ENCODE measurements at regions of chr2 and their contacts with region 1.

Region 1: GRCh38 chr2:160994141-160995002 is 165.9 kb upstream of the TANK start:
- DNase-seq: peak; percentile 77 to 81 (median 80)
- H3K4me3 ChIP-seq: no peak overlapping the region
- H3K4me3 Mint-ChIP-seq: peak overlapping the region in 7 of 8 donors; percentile 19 to 72 (median 64)
- H3K27ac ChIP-seq: no peak overlapping the region
- H3K27ac Mint-ChIP-seq: peak overlapping the region in 4 of 7 donors; percentile 1 to 78 (median 64)
- H3K4me1 ChIP-seq: peaks cover 5% of the 10 kb centered on the region
- H3K4me1 Mint-ChIP-seq: peaks cover 8 to 10% (median 9%) of the 10 kb centered on the region in 4 donors
- H3K27me3 ChIP-seq: no peaks in the 10 kb centered on the region
- H3K27me3 Mint-ChIP-seq: no peaks in the 10 kb centered on the region

Region 2: DNA sequence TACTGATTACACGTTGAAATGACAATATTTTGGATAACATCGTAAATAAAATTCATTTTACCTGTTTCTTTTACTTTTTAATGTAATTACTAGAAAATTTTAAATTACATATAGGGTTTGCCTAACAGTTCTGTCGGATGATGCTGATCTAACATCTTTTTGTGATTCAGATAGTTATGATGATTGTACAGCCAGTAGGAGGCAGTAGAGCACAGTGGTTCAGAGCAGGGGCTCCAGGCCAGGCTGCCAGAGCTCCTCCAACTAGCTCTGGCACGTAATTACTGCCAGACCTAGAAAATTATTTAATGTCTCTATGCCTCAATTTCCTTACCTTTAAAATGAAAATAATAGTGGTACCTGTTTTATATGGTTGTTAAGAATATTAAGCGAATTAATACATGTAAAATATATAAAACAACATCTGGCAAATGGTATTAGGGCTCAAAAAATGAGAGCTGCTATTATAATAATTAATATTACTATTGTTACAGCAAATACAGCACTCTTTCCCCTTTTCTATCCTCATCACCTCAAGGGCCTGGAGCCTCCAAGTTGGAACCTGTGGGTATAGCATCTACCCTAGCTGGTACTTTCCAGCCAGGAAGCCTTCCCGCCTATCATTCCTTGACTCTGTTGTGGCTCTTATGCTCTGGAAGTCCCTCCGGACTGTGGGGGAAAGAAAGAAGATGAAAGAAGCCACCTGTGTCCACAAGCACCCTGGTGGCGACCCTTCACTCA is 884.3 kb before region 1 on chr2:
- CTCF ChIA-PET with region 1: interaction called, 46 read pairs
- POLR2A ChIA-PET with region 1: no interaction called
- intact Hi-C with region 1: loop called (anchors 1 kb)
- DNase-seq: peak; percentile 49 to 60 (median 55)
- H3K4me3 ChIP-seq: no peak overlapping the region
- H3K4me3 Mint-ChIP-seq: no peak overlapping the region
- H3K27ac ChIP-seq: no peak overlapping the region
- H3K27ac Mint-ChIP-seq: no peak overlapping the region
- H3K4me1 ChIP-seq: no peaks in the 10 kb centered on the region
- H3K4me1 Mint-ChIP-seq: no peaks in the 10 kb centered on the region
- H3K27me3 ChIP-seq: no peaks in the 10 kb centered on the region
- H3K27me3 Mint-ChIP-seq: peaks cover 11 to 16% of the 10 kb centered on the region in 2 donors

Region 3: GRCh38 chr2:160252278-160252887 is 742.0 kb before region 1 on chr2:
- CTCF ChIA-PET with region 1: interaction called, 182 read pairs
- POLR2A ChIA-PET with region 1: interaction called, 4 read pairs
- intact Hi-C with region 1: loop called (anchors 1 kb)
- DNase-seq: peak in 1 of 5 donors; percentile 17
- H3K4me3 ChIP-seq: no peak overlapping the region
- H3K4me3 Mint-ChIP-seq: no peak overlapping the region
- H3K27ac ChIP-seq: no peak overlapping the region
- H3K27ac Mint-ChIP-seq: no peak overlapping the region
- H3K4me1 ChIP-seq: no peaks in the 10 kb centered on the region
- H3K4me1 Mint-ChIP-seq: peaks cover 0 to 5% (median 0%) of the 10 kb centered on the region in 4 donors
- H3K27me3 ChIP-seq: no peaks in the 10 kb centered on the region
- H3K27me3 Mint-ChIP-seq: no peaks in the 10 kb centered on the region

Region 4: DNA sequence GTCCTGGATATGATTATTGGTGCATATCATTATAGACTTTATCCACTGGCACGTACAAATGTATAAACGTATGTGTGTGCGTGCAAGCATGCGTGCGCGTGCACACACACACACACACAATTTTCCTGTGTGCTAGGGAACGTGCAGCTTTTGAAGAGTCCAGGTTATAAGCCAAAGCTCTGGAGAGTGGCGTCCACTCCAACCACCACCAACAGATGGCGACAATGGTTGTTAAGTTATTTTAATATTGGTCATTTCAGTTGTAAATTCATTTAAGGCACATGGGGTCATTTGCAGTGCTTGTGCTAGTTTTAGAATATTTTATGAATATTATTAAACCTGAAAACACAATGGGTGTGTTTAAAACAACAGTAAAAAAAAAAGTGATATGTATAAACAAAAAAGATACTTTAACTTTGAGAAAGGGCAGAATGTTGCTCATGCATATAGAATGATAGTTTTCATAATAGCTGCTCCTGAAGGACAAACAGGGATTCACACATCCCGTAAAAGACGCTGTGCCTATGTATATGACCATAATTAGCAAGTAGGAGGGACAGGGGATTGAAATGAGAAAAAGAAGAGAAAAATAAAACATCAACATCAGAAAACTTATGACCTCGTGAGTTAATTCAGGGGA is 670.1 kb before region 1 on chr2:
- CTCF ChIA-PET with region 1: interaction called, 98 read pairs
- POLR2A ChIA-PET with region 1: interaction called, 4 read pairs
- intact Hi-C with region 1: loop called (anchors 1 kb)
- DNase-seq: peak in 4 of 5 donors; percentile 21 to 36 (median 28)
- H3K4me3 ChIP-seq: no peak overlapping the region
- H3K4me3 Mint-ChIP-seq: peak overlapping the region in 3 of 8 donors; percentile 8 to 32 (median 18)
- H3K27ac ChIP-seq: no peak overlapping the region
- H3K27ac Mint-ChIP-seq: peak overlapping the region in 2 of 7 donors; percentile 33 to 51
- H3K4me1 ChIP-seq: peaks cover 66% of the 10 kb centered on the region
- H3K4me1 Mint-ChIP-seq: peaks cover 63 to 95% (median 82%) of the 10 kb centered on the region in 4 donors
- H3K27me3 ChIP-seq: no peaks in the 10 kb centered on the region
- H3K27me3 Mint-ChIP-seq: no peaks in the 10 kb centered on the region

Region 5: DNA sequence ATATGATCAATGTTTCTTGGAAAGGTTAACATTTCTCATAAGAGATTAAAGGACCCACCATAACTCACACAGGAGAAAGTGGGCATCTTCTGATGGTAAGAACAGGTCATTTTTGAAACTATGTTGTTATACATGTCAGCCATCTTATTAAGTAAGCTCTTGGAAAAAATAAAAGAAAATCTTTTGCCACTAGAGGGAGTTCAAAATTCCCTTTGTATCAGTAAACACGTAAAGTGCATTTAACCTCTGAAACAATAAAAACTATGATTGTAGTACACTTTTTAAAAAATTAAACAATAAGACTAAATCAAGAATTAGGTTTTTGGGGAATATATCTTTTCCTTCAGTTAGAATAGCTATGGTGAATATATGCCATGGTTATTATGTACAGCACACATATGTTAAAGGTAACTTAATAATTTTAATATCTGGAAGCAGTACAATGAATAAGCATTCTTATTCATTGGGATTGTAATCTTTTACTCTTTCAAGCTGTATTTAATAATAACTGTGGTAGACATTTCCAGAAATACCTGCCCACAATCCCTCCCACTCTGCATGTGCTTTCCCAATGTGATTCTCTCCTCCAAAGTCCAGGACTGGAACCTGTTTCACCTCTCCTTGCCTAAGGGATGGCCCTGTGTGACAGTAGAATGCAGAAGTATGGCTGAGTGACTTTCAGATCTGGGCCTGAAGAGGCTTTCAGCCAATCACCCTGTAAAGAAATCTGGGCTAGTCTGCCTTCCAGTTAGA is 564.9 kb before region 1 on chr2:
- CTCF ChIA-PET with region 1: interaction called, 8 read pairs
- POLR2A ChIA-PET with region 1: no interaction called
- intact Hi-C with region 1: loop called (anchors 2 kb)
- DNase-seq: peak in 4 of 5 donors; percentile 54 to 65 (median 60)
- H3K4me3 ChIP-seq: no peak overlapping the region
- H3K4me3 Mint-ChIP-seq: peak overlapping the region in 2 of 8 donors; percentile 28 to 56
- H3K27ac ChIP-seq: peak overlapping the region; percentile 17
- H3K27ac Mint-ChIP-seq: peak overlapping the region; percentile 77 to 92 (median 87)
- H3K4me1 ChIP-seq: peaks cover 58% of the 10 kb centered on the region
- H3K4me1 Mint-ChIP-seq: peaks cover 40 to 79% (median 59%) of the 10 kb centered on the region in 4 donors
- H3K27me3 ChIP-seq: no peaks in the 10 kb centered on the region
- H3K27me3 Mint-ChIP-seq: no peaks in the 10 kb centered on the region

Region 6: DNA sequence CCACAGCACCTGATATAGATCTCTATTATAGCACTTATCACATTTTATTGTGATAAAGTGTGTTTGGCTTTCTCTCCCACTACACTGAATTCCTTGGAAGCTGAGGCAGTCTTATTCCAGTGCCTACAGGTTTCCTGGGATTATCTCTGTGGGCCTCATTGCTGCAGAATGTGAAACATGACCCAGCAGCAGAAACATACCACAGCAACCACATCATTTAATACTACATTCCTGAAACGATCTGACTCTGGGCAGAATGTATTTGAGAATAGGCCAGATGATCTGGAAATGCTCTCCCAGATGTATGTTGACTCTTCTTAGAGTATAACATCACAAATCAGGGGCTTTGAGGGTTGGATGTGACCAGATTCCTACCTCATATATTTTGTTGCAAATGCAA is 157.6 kb before region 1 on chr2:
- CTCF ChIA-PET with region 1: no interaction called
- POLR2A ChIA-PET with region 1: no interaction called
- intact Hi-C with region 1: no loop called
- DNase-seq: no peak
- H3K4me3 ChIP-seq: no peak overlapping the region
- H3K4me3 Mint-ChIP-seq: no peak overlapping the region
- H3K27ac ChIP-seq: no peak overlapping the region
- H3K27ac Mint-ChIP-seq: no peak overlapping the region
- H3K4me1 ChIP-seq: no peaks in the 10 kb centered on the region
- H3K4me1 Mint-ChIP-seq: no peaks in the 10 kb centered on the region
- H3K27me3 ChIP-seq: no peaks in the 10 kb centered on the region
- H3K27me3 Mint-ChIP-seq: peaks cover 5 to 9% of the 10 kb centered on the region in 2 donors

Region 7: DNA sequence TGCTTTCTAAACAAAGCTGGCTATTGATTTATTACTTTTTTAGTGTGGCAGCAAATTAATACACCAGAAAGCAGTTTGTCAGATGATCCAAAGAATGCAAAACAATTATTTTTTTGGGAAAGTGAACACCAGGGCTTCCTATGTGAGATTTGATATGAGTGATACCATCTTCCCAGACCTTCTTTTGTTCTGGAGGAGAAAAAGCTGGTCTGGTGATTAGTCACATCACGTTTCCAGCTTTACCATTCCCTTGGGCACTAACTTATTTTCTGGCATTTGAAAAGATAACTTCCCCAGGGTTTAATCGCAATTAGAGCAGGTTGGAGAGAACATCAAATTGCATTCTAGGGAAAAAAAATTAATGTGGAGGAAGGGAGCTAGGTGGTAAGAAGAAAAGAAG is 17.0 kb before region 1 on chr2:
- CTCF ChIA-PET with region 1: interaction called, 22 read pairs
- POLR2A ChIA-PET with region 1: no interaction called
- intact Hi-C with region 1: no loop called
- DNase-seq: no peak
- H3K4me3 ChIP-seq: no peak overlapping the region
- H3K4me3 Mint-ChIP-seq: no peak overlapping the region
- H3K27ac ChIP-seq: no peak overlapping the region
- H3K27ac Mint-ChIP-seq: no peak overlapping the region
- H3K4me1 ChIP-seq: no peaks in the 10 kb centered on the region
- H3K4me1 Mint-ChIP-seq: no peaks in the 10 kb centered on the region
- H3K27me3 ChIP-seq: no peaks in the 10 kb centered on the region
- H3K27me3 Mint-ChIP-seq: peaks cover 3 to 6% of the 10 kb centered on the region in 2 donors

Region 8: DNA sequence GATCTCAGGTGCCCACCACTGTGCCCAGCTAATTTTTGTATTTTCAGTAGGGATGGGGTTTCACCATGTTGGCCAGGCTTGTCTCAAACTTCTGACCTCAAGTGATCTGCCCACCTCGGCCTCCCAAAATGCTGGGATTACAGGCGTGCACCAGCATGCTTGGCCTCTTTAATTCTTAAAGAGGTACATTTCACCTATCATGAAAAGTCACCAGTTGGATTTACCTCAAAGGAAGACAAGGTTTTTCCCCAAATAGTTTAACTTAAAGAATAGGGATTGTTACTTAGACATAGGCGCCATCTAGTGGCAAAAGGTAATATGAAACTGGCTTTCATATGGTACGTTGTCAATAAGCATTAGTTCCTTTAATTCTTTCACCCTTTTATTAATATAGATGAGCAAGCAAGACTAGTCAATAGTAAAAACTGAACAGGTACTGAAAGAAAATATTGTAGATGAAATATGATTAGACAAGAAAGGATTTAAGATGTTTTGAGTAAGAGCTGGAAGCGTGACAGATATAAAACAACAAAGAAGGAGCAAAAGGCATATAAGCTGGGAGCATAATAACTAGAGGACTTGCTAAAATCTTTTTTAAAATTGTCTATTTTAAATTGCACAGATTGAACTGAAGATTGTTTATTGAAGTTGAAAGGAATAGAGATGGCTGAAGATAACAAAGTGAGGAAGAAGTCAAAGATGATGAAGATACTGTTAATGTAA is 278.8 kb after region 1 on chr2:
- CTCF ChIA-PET with region 1: no interaction called
- POLR2A ChIA-PET with region 1: no interaction called
- intact Hi-C with region 1: loop called (anchors 1 kb)
- DNase-seq: peak; percentile 39 to 65 (median 58)
- H3K4me3 ChIP-seq: no peak overlapping the region
- H3K4me3 Mint-ChIP-seq: no peak overlapping the region
- H3K27ac ChIP-seq: no peak overlapping the region
- H3K27ac Mint-ChIP-seq: no peak overlapping the region
- H3K4me1 ChIP-seq: no peaks in the 10 kb centered on the region
- H3K4me1 Mint-ChIP-seq: peaks cover 0 to 4% (median 2%) of the 10 kb centered on the region in 4 donors
- H3K27me3 ChIP-seq: no peaks in the 10 kb centered on the region
- H3K27me3 Mint-ChIP-seq: peaks cover 1 to 4% of the 10 kb centered on the region in 2 donors